Mammary epithelial cell (primary cell): ENCODE measurements at regions of chr22 and their contacts with region 1.

Region 1: GRCh38 chr22:38051900-38052862 is 5.0 kb upstream of the PICK1 start:
- DNase-seq: peak; percentile 50
- H3K4me3 ChIP-seq: no peak overlapping the region
- H3K27ac ChIP-seq: no peak overlapping the region
- H3K4me1 ChIP-seq: peaks cover 6% of the 10 kb centered on the region
- H3K27me3 ChIP-seq: no peaks in the 10 kb centered on the region
- CTCF ChIP-seq: peak; percentile 73 to 83

Region 2: GRCh38 chr22:37999956-38000272 is 52.3 kb before region 1 on chr22:
- CTCF ChIA-PET with region 1: no interaction called
- dilution Hi-C with region 1: loop called (anchors 5 kb)
- in situ Hi-C with region 1: no loop called
- intact Hi-C with region 1: no loop called
- DNase-seq: peak; percentile 96
- H3K4me3 ChIP-seq: no peak overlapping the region
- H3K27ac ChIP-seq: peak overlapping the region; percentile 62
- H3K4me1 ChIP-seq: peaks cover 47% of the 10 kb centered on the region
- H3K27me3 ChIP-seq: no peaks in the 10 kb centered on the region
- CTCF ChIP-seq: no peak

Region 3: DNA sequence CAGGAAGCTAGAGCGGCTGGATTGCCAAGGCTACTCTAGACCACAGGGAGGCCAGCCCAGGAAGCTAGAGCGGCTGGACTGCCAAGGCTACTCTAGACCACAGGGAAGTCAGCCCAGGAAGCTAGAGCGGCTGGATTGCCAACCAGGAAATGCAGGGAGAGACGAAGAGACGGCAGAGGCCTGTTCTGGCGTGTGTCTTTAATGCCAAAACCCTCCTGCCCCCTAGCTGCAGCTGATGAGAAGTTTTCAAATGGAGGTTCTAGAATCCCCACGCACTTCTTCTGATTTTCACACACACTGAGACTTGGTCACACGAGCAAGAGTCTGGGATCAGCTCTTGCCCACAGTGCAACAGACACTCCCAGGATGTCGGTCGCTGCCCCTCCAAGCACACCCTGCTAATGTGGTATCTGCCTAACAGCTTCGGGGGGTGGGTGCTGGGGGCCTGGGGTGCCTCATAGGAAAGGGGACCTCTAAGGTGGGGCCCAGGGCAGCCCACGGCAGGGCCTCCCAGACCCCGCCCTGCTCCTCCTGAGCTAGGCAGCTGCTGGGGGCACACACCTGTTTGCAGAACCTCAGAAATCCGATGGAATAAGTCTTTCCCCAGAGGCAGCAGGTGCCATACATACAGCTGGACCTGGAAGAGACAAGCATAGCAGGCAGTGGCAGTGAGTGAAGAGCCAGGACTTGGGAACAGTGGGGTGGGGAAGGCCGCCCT is 178.1 kb after region 1 on chr22:
- CTCF ChIA-PET with region 1: no interaction called
- dilution Hi-C with region 1: no loop called
- in situ Hi-C with region 1: no loop called
- intact Hi-C with region 1: loop called (anchors 1 kb)
- DNase-seq: no peak
- H3K4me3 ChIP-seq: no peak overlapping the region
- H3K27ac ChIP-seq: peak overlapping the region; percentile 42
- H3K4me1 ChIP-seq: peaks cover 36% of the 10 kb centered on the region
- H3K27me3 ChIP-seq: no peaks in the 10 kb centered on the region
- CTCF ChIP-seq: peak; percentile 56 to 71

Region 4: GRCh38 chr22:38398609-38399461 is 346.7 kb after region 1 on chr22:
- CTCF ChIA-PET with region 1: no interaction called
- dilution Hi-C with region 1: loop called (anchors 5 kb)
- in situ Hi-C with region 1: no loop called
- intact Hi-C with region 1: no loop called
- DNase-seq: peak; percentile 64
- H3K4me3 ChIP-seq: peak overlapping the region; percentile 64 to 80 (median 78)
- H3K27ac ChIP-seq: peak overlapping the region; percentile 40
- H3K4me1 ChIP-seq: peaks cover 14% of the 10 kb centered on the region
- H3K27me3 ChIP-seq: no peaks in the 10 kb centered on the region
- CTCF ChIP-seq: no peak

Region 5: DNA sequence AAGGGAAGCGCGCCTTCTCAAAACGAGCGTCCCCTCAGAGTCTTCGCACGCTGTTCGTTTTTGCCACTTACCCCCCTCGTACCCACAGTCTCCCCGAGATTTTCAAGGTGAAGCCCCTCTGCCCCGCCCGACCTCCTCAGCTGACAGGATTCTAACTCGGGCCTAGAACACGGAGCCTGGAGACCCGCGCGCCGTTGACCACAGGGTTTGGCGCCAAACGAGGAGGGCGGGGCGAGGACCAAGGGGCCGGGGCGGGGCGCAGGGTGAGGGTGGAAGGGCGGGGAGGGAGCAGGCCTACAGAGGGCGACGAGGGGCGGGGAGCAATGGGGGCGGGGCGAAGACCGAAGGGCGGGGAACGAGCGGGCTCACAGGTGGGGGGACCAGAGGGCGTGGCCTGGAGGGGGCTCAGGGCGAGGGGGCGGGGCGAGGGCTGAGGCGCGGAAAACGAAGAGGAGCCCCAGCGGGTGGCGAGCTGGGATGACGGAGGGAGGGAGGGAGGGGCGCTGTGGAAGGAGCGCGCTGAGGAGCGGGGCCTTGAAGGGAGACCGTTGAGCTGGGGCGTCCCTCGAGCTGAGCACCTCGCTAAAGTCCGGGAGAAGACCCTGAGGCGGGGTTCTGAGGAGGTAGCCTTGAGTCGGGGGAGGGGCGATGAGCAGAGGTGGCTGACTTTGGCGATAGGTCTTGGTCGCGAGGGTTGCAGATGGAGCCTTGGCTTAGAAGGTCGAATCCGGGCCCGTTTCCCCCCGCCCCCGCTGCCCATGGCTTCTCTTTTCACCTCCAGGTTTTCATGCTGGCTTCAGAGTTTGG is 518.0 kb after region 1 on chr22 and contains the start of gene DMC1:
- CTCF ChIA-PET with region 1: no interaction called
- dilution Hi-C with region 1: no loop called
- in situ Hi-C with region 1: loop called in 1 of 2 experiments (anchors 25 kb)
- intact Hi-C with region 1: loop called (anchors 1 kb)
- DNase-seq: peak; percentile 67
- H3K4me3 ChIP-seq: peak within 1 kb of the TSS; percentile 48 to 73 (median 65)
- H3K27ac ChIP-seq: peak within 1 kb of the TSS; percentile 24
- H3K4me1 ChIP-seq: peaks cover 21% of the 10 kb centered on the region
- H3K27me3 ChIP-seq: no peaks in the 10 kb centered on the region
- CTCF ChIP-seq: no peak
- total RNA-seq, gene DMC1: 0.50 to 1.3 TPM

Region 6: DNA sequence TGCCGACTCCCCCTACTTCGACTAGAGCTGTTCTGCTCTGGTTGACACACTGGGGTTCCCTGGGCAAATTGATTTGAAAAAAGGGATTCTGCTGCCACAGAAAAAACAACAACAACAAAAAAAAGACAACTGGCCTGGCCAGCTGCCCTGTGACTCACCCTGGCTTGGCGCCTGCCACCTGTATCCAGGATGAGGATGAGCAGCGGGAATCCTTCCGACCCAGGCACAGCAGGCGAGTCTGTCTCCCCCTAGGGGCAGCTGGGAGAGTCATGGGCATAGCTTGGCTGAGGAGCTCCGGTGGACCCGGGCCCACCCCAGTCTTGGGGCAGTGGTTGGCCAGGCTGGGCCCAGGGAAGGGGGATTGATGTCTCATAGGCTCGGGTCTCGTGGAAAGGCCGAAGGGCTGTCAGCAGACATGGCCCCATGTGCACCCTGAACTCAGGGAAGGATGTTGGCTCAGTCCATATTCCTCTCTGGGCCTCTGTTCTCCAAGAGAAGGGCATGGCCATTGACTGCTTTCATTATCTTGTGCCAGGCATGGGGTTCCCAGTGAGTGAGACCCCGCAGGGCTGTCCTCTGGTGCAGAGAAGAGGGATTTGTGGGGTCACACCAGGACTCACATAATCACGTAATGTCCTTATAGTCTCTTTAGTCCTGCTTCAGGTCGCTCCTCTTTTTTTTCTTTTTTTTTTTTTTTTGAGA is 714.0 kb after region 1 on chr22:
- CTCF ChIA-PET with region 1: interaction called, 3 read pairs
- dilution Hi-C with region 1: no loop called
- in situ Hi-C with region 1: no loop called
- intact Hi-C with region 1: loop called (anchors 1 kb)
- DNase-seq: peak; percentile 65
- H3K4me3 ChIP-seq: no peak overlapping the region
- H3K27ac ChIP-seq: no peak overlapping the region
- H3K4me1 ChIP-seq: peaks cover 13% of the 10 kb centered on the region
- H3K27me3 ChIP-seq: no peaks in the 10 kb centered on the region
- CTCF ChIP-seq: peak; percentile 96 to 98